ENCODE measurements at regions of chr15 and their contacts with region 1.

Region 1: GRCh38 chr15:97903971-97904572 is 56.4 kb upstream of the ARRDC4 start:
- DNase-seq: peak; percentile 66 to 77
- H3K4me3 ChIP-seq: no peak overlapping the region
- H3K4me3 Mint-ChIP-seq: no peak overlapping the region
- H3K27ac Mint-ChIP-seq: no peak overlapping the region
- H3K4me1 ChIP-seq: no peaks in the 10 kb centered on the region
- H3K4me1 Mint-ChIP-seq: no peaks in the 10 kb centered on the region
- H3K27me3 ChIP-seq: no peaks in the 10 kb centered on the region; the same call in 1 of the 2 replicates
- H3K27me3 Mint-ChIP-seq: peaks cover 9% of the 10 kb centered on the region
- CTCF ChIP-seq: peak; percentile 51 to 77

Region 2: DNA sequence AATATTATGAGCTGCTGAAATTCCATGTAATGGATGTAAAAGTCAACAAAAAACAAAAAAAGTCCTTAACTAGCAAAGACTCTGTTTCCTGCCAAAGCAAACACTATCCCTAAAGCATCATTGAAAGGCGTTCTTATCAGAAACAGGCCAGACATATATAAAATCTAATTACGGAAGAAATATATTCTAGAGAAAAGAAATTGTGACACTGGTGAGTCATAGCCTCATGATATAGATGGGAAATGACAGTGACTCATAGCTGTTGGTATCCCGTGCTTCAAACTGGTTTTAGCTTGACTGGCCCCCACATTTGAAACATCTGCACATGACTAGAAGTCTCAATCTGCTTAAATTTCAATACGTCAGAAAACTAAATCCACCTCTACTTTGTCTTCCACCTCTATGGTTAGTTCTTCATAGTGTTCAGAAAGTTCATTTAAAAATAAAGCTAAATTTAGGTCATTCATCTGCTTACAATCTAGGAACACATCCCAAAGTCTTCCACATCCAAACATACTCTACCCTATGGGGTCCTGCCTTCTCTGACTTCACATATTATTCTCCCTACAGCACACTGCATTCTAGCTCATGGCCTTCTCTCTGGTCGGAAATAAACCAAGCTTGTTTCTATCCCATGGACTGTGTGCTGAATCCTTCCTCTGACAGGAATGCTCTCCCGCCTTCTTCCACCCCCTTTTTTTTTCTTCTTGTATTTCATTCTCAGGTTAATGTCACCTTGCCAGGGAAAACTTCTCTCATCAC is 399.9 kb before region 1 on chr15:
- CTCF ChIA-PET with region 1: no interaction called
- POLR2A ChIA-PET with region 1: no interaction called
- intact Hi-C with region 1: no loop called
- DNase-seq: no peak
- H3K4me3 ChIP-seq: no peak overlapping the region
- H3K4me3 Mint-ChIP-seq: no peak overlapping the region
- H3K27ac Mint-ChIP-seq: no peak overlapping the region
- H3K4me1 ChIP-seq: no peaks in the 10 kb centered on the region
- H3K4me1 Mint-ChIP-seq: no peaks in the 10 kb centered on the region
- H3K27me3 ChIP-seq: no peaks in the 10 kb centered on the region
- H3K27me3 Mint-ChIP-seq: no peaks in the 10 kb centered on the region
- CTCF ChIP-seq: no peak

Region 3: GRCh38 chr15:97745465-97746071 is 158.5 kb before region 1 on chr15:
- CTCF ChIA-PET with region 1: no interaction called
- POLR2A ChIA-PET with region 1: no interaction called
- intact Hi-C with region 1: no loop called
- DNase-seq: peak; percentile 47 to 70
- H3K4me3 ChIP-seq: no peak overlapping the region
- H3K4me3 Mint-ChIP-seq: no peak overlapping the region
- H3K27ac Mint-ChIP-seq: no peak overlapping the region
- H3K4me1 ChIP-seq: no peaks in the 10 kb centered on the region
- H3K4me1 Mint-ChIP-seq: no peaks in the 10 kb centered on the region
- H3K27me3 ChIP-seq: no peaks in the 10 kb centered on the region
- H3K27me3 Mint-ChIP-seq: peaks cover 7% of the 10 kb centered on the region
- CTCF ChIP-seq: peak; percentile 63 to 73

Region 4: DNA sequence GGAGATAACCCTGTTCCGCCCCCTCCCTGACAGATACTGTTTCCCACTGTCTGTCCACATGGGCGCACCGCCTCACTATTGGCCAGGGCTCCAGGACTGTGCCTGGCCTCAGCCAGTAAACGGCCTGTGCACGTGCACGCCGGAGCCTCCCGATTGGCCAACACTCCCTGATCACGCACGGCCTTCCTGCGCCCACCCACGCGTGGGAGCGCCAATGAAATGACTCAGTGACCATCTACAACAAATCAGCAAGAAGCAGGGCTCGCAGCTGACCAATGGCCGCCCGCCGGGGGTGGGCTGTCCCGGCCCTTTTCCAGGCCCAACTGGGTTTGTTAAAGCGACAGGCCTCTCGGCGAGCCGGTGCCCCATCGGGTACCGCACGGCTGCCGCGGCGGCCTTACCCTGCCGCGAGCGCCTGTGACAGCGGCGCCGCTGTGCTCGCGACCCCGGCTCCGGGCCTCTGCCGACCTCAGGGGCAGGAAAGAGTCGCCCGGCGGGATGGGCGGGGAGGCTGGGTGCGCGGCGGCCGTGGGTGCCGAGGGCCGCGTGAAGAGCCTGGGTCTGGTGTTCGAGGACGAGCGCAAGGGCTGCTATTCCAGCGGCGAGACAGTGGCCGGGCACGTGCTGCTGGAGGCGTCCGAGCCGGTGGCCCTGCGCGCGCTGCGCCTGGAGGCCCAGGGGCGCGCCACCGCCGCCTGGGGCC is 56.4 kb after region 1 on chr15 and contains the start of gene ARRDC4:
- CTCF ChIA-PET with region 1: no interaction called
- POLR2A ChIA-PET with region 1: no interaction called
- intact Hi-C with region 1: loop called (anchors 1 kb)
- DNase-seq: peak; percentile 96 to 99
- H3K4me3 ChIP-seq: peak within 1 kb of the TSS; percentile 79
- H3K4me3 Mint-ChIP-seq: peak within 1 kb of the TSS; percentile 58
- H3K27ac Mint-ChIP-seq: peak within 1 kb of the TSS; percentile 20
- H3K4me1 ChIP-seq: no peaks in the 10 kb centered on the region
- H3K4me1 Mint-ChIP-seq: no peaks in the 10 kb centered on the region
- H3K27me3 ChIP-seq: no peaks in the 10 kb centered on the region
- H3K27me3 Mint-ChIP-seq: no peaks in the 10 kb centered on the region
- CTCF ChIP-seq: no peak
- total RNA-seq, gene ARRDC4: 3.2 and 4.1 TPM in 2 replicates

Region 5: DNA sequence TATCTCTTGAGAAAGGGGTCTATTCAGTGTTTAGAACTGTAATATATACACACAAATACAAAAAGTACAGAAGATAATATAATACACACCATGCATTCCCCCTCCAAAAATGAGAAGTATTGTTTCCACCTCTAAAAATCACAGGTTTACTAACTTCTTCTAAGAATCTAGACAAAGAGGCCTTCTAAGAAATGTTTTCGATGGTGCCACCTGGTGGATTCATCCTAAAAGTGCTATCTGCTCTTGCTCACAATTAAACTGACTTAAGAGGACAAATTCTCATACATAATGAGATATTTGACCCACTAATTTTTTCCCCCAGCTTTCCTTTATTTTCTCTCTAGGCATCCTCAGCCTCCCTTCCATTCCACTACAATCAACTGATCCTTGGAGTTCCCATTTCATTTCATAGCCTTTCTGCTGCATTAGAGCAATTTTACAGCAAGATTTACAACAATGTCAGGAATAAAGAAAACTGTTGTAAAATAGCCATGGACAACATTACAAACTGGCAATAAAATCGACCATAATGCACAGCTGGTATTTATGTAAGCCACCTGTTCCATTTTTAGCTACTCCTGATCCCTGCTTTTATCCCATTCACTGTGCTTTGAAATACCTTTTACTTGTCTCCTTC is 181.0 kb after region 1 on chr15:
- CTCF ChIA-PET with region 1: no interaction called
- POLR2A ChIA-PET with region 1: no interaction called
- intact Hi-C with region 1: loop called (anchors 1 kb)
- DNase-seq: peak in 1 of 2 experiments; percentile 29
- H3K4me3 ChIP-seq: no peak overlapping the region
- H3K4me3 Mint-ChIP-seq: no peak overlapping the region
- H3K27ac Mint-ChIP-seq: no peak overlapping the region
- H3K4me1 ChIP-seq: no peaks in the 10 kb centered on the region
- H3K4me1 Mint-ChIP-seq: no peaks in the 10 kb centered on the region
- H3K27me3 ChIP-seq: no peaks in the 10 kb centered on the region
- H3K27me3 Mint-ChIP-seq: no peaks in the 10 kb centered on the region
- CTCF ChIP-seq: peak; percentile 43 to 55

Region 6: DNA sequence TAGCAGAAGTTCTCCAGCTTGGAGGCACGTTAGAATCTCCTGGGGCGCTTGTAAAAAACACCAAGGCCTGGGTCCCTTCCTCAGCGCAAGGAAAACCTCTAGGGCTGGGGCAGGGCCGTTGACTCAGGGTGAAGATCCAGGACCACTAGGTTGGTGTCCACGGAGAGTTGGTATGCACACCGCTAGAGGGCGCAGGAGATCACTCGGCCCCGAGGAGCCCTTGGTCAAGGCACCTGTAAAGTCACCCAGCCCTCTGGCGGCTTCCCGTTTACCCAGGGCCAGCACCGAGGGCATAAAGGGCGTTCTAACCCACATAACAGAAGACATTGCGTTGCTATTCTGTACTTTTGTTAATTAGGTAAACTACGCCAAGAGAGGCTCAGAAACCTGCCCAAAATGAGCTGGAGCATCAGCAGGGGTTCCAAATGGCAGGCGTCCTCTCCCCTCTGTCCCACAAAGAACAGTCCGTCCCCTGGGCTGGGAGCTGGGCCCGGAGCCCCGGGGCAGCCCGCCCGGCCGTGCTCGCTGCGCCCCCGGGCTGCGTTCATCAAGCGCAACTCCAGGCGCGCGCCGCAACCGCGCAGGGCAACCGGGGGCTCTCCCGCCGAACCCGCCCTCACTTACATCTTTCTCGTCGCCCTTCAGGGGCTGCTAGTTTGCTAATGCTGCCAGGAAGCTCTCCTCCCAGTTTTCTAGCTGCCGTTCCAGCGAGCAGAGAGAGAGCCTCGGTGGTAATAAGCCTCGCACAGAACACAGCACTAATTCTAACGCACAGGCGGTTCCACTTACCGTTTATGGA is 388.6 kb after region 1 on chr15:
- CTCF ChIA-PET with region 1: no interaction called
- POLR2A ChIA-PET with region 1: no interaction called
- intact Hi-C with region 1: loop called (anchors 1 kb)
- DNase-seq: peak; percentile 61
- H3K4me3 ChIP-seq: no peak overlapping the region
- H3K4me3 Mint-ChIP-seq: no peak overlapping the region
- H3K27ac Mint-ChIP-seq: no peak overlapping the region
- H3K4me1 ChIP-seq: no peaks in the 10 kb centered on the region
- H3K4me1 Mint-ChIP-seq: no peaks in the 10 kb centered on the region
- H3K27me3 ChIP-seq: no peaks in the 10 kb centered on the region
- H3K27me3 Mint-ChIP-seq: peaks cover 7% of the 10 kb centered on the region
- CTCF ChIP-seq: peak; percentile 44 to 69

Region 7: DNA sequence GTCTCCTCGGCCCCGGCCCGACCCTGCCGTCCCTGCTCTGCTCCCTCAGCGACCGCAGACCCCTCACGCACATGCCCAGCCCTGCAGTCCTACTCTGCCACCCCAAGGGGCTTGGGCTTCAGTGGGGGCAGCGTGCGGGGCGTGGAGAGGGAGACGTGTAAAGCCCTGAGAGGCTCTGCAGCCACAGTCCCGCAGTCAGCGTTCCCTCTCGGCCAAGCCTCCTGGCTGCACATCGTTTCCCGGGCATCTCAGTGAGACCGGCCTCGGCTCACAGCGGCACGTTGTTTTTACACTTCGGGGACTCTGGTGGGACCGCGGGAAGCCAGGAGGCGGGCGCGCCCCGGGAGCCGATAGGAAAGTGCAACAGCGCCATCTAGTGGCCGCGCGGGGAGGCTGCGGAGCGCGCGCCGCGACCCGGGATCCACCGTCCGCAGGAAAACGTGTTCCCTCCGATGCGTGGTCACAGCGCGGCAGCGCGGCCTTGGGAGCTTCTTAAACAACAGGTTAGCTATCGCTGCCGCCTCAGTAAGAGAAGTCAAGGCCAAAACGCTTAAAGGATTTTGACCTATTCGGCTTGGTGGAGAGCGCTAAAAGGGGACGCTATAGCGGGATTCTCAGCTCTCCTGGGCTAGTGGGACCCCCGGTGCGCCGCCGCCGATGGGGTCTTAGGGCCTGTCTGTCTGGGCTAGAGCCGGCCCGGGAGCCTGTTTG is 517.5 kb after region 1 on chr15:
- CTCF ChIA-PET with region 1: no interaction called
- POLR2A ChIA-PET with region 1: no interaction called
- intact Hi-C with region 1: loop called (anchors 1 kb)
- DNase-seq: peak; percentile 48 to 71
- H3K4me3 ChIP-seq: no peak overlapping the region
- H3K4me3 Mint-ChIP-seq: no peak overlapping the region
- H3K27ac Mint-ChIP-seq: no peak overlapping the region
- H3K4me1 ChIP-seq: peaks cover 8% of the 10 kb centered on the region; the same call in 1 of the 2 replicates
- H3K4me1 Mint-ChIP-seq: no peaks in the 10 kb centered on the region
- H3K27me3 ChIP-seq: peaks cover 2% of the 10 kb centered on the region
- H3K27me3 Mint-ChIP-seq: peaks cover 28% of the 10 kb centered on the region
- CTCF ChIP-seq: peak; percentile 90 to 93

Measured in Caco-2 (cell line).